BJ (cell line): ENCODE measurements at regions of chr4 and their contacts with region 1.

Region 1: GRCh38 chr4:77044461-77045150 is 31.2 kb downstream of the CCNI start:
- DNase-seq: no peak
- H3K4me3 ChIP-seq: no peak overlapping the region
- H3K27me3 ChIP-seq: no peaks in the 10 kb centered on the region
- CTCF ChIP-seq: peak; percentile 62

Region 2: DNA sequence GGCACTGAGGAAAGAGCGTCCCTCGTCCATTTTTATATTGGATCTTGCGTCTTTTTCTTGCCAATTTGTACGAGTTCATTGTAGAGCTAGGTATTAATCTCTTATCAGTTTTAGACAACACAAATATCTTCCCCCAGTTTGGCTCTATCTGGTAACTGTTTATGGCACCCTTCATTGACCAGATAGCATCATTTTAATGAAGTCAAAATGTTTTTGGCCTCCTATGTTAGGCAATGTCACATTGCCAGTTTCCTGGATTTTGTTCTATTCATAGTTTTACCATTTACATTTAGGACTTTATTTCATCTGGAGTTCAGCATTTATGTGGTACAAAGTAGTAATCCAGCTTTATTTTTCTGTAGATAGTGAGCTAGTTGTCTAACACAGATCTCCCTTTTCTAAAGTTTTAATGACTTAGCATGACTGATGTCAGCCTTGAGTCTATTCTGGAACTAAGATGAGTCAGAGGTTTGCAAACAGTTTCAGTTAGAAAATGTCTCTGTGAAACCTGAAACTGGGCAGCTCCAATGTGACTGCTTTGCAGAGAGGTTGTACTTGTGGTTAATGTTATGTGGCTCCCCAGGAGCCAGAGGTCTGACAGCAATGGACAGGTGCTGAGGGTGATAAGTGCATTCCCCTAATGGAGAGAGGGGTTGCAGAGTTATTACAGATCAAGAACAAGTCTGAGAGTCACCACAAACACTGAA is 743.4 kb before region 1 on chr4:
- CTCF ChIA-PET with region 1: no interaction called
- POLR2A ChIA-PET with region 1: interaction called, 16 read pairs
- DNase-seq: peak; percentile 62
- H3K4me3 ChIP-seq: no peak overlapping the region
- H3K27me3 ChIP-seq: no peaks in the 10 kb centered on the region
- CTCF ChIP-seq: no peak